ENCODE measurements at regions of chr3 and their contacts with region 1.

Region 1: DNA sequence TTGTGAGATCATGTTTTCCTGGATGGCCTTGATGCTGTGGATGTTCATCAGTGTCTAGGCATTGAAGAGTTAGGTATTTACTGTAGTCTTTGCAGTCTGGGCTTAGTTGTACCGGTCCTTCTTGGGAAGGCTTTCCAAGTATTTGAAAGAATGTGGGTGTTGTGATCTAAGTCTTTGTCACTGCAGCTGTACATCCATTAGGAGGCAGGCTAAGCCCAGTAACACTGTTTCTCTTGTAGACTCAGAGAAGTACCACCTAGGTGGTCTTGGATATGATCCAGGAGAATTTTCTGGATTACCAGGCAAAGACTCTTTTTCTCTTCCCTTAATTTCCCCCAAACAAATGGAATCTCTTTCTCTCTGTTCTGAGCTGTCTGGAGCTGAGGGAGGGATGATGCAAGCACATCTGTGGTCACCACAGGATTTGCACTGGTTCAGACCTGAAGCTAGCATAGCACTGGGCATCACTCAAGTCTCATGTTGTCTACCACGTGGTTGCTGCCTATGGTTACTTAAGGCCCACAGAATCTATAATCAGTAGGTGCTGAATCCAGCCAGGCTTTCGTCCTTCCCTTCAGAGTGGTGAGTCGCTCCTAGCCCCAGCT is 227.6 kb downstream of the NECTIN3 start:
- DNase-seq: no peak

Region 2: GRCh38 chr3:111428301-111428700 is 129.1 kb after region 1 on chr3:
- intact Hi-C with region 1: loop called in 1 of 2 experiments (anchors 10 kb)
- DNase-seq: no peak